Activated CD4-positive, alpha-beta T cell treated with anti-CD3 and anti-CD28 coated beads for 36 hours (primary cell): ENCODE measurements at regions of chr1 and their contacts with region 1.

Region 1: DNA sequence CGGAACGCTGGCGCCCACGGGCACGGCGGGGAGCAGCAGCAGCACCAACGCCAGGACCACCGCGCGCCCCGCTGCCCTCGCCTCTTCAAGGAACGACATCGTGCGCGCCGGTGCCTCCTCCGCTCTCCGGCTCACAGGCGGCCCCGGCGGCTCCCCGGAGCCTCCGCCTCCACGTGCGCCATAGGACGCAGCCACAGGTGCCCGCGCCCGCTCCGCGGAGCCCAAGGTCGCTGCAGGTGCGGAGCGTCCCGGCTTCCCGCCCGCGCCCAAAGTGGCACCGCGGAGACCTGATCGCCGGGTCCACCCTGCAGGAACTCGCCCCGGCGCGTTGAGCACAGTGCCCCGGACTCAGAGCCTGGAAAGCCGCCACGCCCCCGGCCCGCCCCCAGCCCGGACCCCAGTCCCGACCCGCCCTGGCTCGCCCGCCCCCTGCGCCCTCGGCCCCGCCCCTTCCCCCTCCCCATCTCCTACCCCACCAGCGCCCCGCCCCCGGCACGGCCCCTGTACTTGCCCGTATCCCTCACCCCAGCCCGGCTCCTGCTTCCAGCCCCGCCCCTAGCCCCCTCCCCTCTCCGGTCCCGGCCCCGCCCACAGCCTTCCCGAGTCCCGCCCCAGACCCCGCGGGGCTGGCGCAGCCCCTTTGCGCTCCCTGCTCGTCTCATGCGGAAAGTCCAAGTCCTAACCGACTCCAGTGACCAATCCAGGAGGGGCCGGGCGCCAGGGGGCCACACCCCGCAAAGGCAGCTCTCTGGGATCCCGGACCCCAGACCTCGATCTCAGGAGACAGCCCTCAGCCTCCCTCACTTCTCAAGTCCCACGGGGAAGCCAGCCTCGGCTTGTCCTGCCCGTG is at the start of gene MEGF6:
- DNase-seq: peak; percentile 72
- ATAC-seq: peak; percentile 67
- H3K4me3 Mint-ChIP-seq: peak within 1 kb of the TSS; percentile 63
- H3K27ac Mint-ChIP-seq: no peak within 1 kb of the TSS
- H3K4me1 Mint-ChIP-seq: peaks cover 5% of the 10 kb centered on the region
- H3K27me3 Mint-ChIP-seq: peaks cover 16% of the 10 kb centered on the region
- total RNA-seq, gene MEGF6: 2.6 to 4.5 TPM

Region 2: DNA sequence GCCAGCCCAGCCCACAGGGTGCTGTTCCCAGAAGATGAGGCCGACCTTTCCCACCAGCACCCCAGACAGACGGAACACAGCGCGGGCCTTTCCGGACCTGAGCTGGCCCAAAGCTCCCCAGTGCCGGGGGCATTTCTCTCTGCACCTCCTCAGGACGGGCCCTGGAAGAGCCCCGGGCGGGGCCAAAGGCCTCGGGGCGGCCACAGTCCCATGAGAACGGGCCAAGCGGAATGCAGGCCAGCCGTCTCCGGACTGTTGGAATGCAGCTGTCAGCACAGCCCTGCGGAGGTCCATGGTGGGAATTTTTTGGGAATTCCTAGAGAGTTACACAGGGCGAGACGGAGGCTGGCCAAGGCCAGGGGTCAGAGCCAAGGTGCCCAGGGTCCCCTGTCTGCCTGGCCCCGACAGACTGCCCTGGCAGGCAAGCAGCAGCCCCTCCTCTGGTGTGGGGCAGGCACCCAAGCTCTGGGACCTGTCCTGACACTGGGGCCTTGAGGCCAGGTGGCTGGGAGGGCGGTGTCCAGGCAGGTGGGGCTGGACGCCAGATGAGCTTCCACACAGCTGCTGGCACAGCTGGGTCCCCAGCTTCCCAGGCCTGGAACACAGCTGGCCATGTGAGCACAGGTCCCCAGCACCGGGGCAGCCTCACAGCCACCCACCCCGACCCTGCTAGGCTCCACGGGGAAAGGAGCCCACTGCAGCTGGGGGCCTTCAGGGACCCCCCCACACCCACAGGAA is 63.1 kb before region 1 on chr1:
- CTCF ChIA-PET with region 1: no interaction called
- POLR2A ChIA-PET with region 1: no interaction called
- intact Hi-C with region 1: no loop called
- DNase-seq: no peak
- ATAC-seq: no peak
- H3K4me3 Mint-ChIP-seq: no peak overlapping the region
- H3K27ac Mint-ChIP-seq: no peak overlapping the region
- H3K4me1 Mint-ChIP-seq: no peaks in the 10 kb centered on the region
- H3K27me3 Mint-ChIP-seq: no peaks in the 10 kb centered on the region

Region 3: DNA sequence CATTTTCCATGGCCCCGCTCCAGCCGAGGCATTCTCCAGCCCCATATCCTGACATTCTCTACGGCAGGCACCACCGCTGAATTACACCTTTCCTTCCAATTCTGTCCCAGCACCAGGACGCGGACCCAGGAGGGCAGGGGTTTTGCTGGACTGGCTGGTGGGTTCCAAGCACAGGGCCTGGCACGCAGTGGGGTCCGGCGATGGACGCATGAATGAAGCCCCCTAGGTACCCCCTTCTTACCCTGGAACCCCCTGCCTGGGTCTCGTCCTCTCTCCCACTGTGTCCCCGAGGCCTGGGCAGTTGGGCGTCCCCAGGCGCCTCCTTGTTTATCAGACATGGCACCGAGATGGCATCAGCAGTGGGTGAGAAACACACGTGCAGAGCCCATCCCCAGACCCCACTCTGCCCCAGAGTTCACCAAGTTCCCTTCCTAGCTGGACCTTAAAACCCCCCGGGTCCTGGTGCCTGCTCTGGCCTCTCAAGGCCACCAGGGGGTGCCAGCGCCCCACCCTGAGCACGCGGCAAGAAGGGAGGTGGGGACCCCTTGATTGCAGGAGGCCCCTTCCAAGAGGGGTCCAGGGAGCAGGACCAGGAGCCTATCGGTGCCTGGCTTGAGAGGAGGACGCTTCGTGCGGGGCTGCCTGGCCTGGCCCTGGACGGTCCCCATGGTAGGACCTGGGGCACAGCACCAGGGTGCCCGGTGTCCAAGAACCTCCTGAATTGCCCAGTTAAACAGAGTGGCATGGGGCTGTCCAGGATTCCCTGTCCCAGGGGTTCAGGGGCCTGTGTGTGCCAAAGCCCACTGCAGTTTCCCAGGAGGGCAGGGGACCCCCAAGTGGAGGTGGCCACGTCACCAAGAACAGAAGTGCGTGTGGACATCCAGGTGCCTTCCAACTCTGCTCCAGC is 46.2 kb before region 1 on chr1:
- CTCF ChIA-PET with region 1: interaction called, 3 read pairs
- POLR2A ChIA-PET with region 1: no interaction called
- intact Hi-C with region 1: loop called in 1 of 2 experiments (anchors 1 kb)
- DNase-seq: peak; percentile 55
- ATAC-seq: peak; percentile 55
- H3K4me3 Mint-ChIP-seq: no peak overlapping the region
- H3K27ac Mint-ChIP-seq: no peak overlapping the region
- H3K4me1 Mint-ChIP-seq: no peaks in the 10 kb centered on the region
- H3K27me3 Mint-ChIP-seq: no peaks in the 10 kb centered on the region